Heart right ventricle (tissue), 16 donors: ENCODE measurements at regions of chr9 and their contacts with region 1.

Region 1: DNA sequence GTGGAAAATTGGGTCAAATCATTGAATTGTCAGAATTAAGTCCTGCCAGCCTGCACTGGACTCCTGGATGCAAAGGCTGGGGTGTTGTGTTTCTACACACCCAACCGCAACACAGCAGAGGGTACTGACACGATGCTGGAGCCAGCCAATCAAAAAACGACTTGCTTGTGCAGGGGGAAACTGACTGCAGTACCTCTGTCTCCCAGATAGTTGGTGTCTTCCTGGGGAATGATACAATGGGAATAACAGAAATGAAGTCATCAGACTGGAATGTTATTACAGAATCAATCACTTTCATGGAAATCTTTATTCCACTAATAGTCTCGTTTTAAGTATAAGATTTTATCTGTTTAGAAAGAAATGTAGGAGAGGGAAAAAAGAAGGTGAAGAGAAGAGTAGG is 330.3 kb downstream of the MLLT3 start:
- DNase-seq: no peak
- ATAC-seq: no peak
- H3K4me3 ChIP-seq: no peak overlapping the region
- H3K27ac ChIP-seq: no peak overlapping the region
- H3K4me1 ChIP-seq: peaks cover 0 to 6% (median 0%) of the 10 kb centered on the region in 9 donors
- H3K27me3 ChIP-seq: no peaks in the 10 kb centered on the region
- CTCF ChIP-seq: no peak

Region 2: DNA sequence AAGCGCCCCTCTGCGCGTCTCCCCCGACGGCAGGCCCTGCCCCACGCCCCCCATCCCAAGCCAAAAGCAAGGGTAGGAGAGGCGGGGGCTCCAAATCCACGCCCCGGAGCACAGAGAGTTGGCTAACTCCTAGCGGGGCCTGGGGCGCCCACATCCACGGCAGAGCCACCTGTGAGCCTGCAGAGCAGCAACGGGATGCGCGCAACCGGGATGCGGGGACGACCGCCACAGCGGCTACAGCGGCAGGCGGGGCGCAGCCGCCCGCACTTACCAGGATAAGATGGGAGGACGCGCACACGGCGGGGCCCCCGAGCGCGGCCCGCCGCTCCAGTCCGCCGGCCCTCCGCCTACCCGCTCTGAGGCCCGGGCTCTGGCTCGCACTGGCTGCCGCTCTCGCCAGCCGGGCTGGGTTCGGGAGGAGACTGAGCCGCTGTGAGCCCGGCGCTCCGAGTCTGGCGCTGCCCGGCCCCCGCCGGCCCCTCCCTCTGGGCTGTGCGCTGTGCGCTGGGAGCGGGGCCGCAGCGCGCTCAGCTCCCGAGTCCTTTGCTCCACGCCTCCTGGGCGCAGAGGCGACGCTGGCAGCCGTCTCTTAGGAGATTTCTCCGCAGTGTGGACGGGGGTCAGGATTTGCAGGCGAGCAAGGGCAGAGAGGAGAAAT is 503.3 kb before region 1 on chr9 and contains the start of gene SLC24A2:
- intact Hi-C with region 1: no loop called
- DNase-seq: no peak
- ATAC-seq: peak in 1 of 8 donors; percentile 20
- H3K4me3 ChIP-seq: peak within 1 kb of the TSS in 9 of 10 donors; percentile 10 to 47 (median 28)
- H3K27ac ChIP-seq: no peak within 1 kb of the TSS
- H3K4me1 ChIP-seq: peaks cover 0 to 7% (median 0%) of the 10 kb centered on the region in 9 donors
- H3K27me3 ChIP-seq: peaks cover 4 to 54% (median 29%) of the 10 kb centered on the region in 7 donors
- CTCF ChIP-seq: no peak
- total RNA-seq, gene SLC24A2: 0.02 to 0.26 (median 0.13) TPM in 6 of 10 donors, not detected in the others

Region 3: GRCh38 chr9:20032413-20033006 is 259.5 kb before region 1 on chr9:
- intact Hi-C with region 1: loop called in 2 of 10 experiments (anchors 10 kb)
- DNase-seq: no peak
- ATAC-seq: peak in 5 of 8 donors; percentile 57 to 84 (median 71)
- H3K4me3 ChIP-seq: no peak overlapping the region
- H3K27ac ChIP-seq: peak overlapping the region in 9 of 10 donors; percentile 41 to 84 (median 64)
- H3K4me1 ChIP-seq: peaks cover 2 to 57% (median 18%) of the 10 kb centered on the region in 9 donors
- H3K27me3 ChIP-seq: no peaks in the 10 kb centered on the region
- CTCF ChIP-seq: no peak